Activated CD4-positive, alpha-beta T cell treated with anti-CD3 and anti-CD28 coated beads, Interleukin-2, amount 10 ng/mL, durations not matched to agents 24 days and 14 days (primary cell): ENCODE measurements at regions of chr20 and their contacts with region 1.

Region 1: DNA sequence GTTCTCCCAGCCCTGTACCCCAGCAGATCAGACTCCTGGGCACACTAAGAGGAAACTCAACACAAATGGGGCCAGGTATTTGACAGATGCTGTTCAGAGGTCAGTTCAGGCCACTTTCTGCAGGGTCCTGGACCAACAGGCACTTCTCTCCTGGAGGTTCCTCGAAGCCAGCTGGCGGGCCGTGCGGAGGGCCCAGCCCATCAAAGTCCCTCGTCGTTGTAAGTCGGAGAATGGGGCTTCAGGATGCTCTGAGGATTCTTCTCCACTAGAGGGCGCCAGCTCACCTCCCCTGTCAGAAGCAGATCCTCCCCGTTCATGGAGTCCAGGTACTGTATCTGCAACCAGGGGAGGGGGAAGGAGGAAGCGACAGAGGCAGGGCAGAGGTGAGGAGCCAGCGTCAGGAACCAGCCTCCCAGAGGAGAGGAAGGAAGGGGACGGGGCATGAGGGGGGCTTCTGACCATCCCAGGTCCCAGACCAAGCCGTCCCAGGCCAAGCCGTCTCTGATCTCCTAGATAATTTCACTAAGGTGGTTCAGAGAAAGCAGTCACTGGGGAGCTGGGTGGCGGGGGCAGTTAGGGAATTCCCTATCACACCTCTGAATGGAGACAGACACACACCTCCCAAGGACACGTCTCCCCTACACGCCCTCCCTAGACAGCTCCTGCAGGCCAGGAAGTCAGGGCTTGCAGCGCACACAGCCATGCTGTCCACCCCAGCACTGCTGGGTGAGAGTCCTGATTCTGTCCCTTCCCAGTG is 11.7 kb upstream of the FAM83C start:
- DNase-seq: peak; percentile 95
- H3K4me3 Mint-ChIP-seq: no peak overlapping the region
- H3K27ac Mint-ChIP-seq: peak overlapping the region; percentile 78
- H3K4me1 Mint-ChIP-seq: peaks cover 41% of the 10 kb centered on the region
- H3K27me3 Mint-ChIP-seq: no peaks in the 10 kb centered on the region

Region 2: DNA sequence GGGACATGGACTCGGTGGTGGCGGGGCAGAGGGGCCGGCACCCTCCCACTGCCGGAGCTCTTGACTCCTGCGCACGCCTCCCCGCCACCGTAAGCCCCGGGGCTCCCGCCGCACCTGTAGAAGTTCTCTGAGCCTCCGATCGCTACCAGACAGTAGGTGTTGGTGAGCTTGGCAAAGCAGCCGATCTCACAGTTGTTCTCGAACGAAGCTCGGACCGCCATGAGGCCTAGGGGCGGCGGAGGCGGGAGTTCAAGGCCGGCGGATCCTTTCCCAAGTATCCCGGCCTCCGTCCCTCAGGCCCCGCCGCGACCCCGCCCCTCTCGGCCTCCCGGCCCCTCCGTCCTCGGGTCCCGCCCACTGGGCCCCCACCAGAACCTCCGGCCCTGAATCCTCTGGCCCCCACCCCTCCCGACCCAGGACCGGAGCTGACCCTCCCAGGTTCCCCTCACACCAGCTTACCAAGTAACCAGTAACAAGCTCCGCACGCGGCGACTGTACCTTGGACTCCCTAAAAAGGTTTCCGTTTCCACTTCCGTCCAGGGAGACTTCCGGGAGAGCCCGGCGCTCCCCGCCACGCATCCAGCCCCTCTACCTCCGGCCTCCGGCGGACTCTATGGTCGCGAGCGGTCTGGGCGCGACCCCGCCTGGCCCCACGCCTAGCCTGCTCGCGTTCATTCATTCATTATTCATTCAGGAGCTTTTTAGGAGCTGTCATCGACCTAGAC is 19.5 kb before region 1 on chr20 and contains the start of gene EIF6:
- intact Hi-C with region 1: loop called (anchors 2 kb)
- DNase-seq: peak; percentile 94
- H3K4me3 Mint-ChIP-seq: peak within 1 kb of the TSS; percentile 90
- H3K27ac Mint-ChIP-seq: peak within 1 kb of the TSS; percentile 95
- H3K4me1 Mint-ChIP-seq: peaks cover 27% of the 10 kb centered on the region
- H3K27me3 Mint-ChIP-seq: no peaks in the 10 kb centered on the region
- total RNA-seq, gene EIF6: 211 and 216 TPM in 2 replicates

Region 3: GRCh38 chr20:35329435-35330139 is 25.7 kb after region 1 on chr20:
- intact Hi-C with region 1: loop called (anchors 1 kb)
- DNase-seq: peak; percentile 83
- H3K4me3 Mint-ChIP-seq: no peak overlapping the region
- H3K27ac Mint-ChIP-seq: peak overlapping the region; percentile 74
- H3K4me1 Mint-ChIP-seq: peaks cover 36% of the 10 kb centered on the region
- H3K27me3 Mint-ChIP-seq: no peaks in the 10 kb centered on the region

Region 4: GRCh38 chr20:35447082-35447789 is 143.3 kb after region 1 on chr20:
- intact Hi-C with region 1: loop called (anchors 1 kb)
- DNase-seq: peak; percentile 98
- H3K4me3 Mint-ChIP-seq: peak overlapping the region; percentile 92
- H3K27ac Mint-ChIP-seq: peak overlapping the region; percentile 79
- H3K4me1 Mint-ChIP-seq: peaks cover 4% of the 10 kb centered on the region
- H3K27me3 Mint-ChIP-seq: peaks cover 3% of the 10 kb centered on the region

Region 5: DNA sequence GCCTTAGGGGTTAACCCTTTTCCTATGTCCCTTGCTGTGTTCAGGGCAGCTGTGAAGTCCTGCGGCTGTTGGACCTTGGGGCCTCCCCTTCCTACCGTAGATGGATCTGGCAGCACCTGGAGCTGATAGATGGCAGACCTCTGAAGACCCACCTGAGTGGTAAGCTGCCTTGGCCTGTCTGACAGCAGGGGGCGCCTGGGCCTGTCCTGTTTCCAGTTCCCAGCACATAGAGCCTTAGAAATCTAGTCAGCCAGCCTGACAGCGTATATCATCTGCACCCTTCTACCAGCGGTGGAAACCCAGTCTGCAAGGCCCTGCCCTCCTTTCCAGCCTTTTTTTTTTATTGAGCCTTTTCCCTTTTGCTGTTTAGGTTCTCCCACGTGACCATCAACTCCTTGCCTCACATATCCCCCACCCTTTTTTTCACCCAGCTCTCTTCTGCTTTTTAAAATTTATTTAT is 691.1 kb after region 1 on chr20:
- intact Hi-C with region 1: no loop called
- DNase-seq: peak; percentile 90
- H3K4me3 Mint-ChIP-seq: no peak overlapping the region
- H3K27ac Mint-ChIP-seq: no peak overlapping the region
- H3K4me1 Mint-ChIP-seq: peaks cover 2% of the 10 kb centered on the region
- H3K27me3 Mint-ChIP-seq: peaks cover 13% of the 10 kb centered on the region